GM12878 (cell line): ENCODE measurements at regions of chr9 and their contacts with region 1.

Region 1: DNA sequence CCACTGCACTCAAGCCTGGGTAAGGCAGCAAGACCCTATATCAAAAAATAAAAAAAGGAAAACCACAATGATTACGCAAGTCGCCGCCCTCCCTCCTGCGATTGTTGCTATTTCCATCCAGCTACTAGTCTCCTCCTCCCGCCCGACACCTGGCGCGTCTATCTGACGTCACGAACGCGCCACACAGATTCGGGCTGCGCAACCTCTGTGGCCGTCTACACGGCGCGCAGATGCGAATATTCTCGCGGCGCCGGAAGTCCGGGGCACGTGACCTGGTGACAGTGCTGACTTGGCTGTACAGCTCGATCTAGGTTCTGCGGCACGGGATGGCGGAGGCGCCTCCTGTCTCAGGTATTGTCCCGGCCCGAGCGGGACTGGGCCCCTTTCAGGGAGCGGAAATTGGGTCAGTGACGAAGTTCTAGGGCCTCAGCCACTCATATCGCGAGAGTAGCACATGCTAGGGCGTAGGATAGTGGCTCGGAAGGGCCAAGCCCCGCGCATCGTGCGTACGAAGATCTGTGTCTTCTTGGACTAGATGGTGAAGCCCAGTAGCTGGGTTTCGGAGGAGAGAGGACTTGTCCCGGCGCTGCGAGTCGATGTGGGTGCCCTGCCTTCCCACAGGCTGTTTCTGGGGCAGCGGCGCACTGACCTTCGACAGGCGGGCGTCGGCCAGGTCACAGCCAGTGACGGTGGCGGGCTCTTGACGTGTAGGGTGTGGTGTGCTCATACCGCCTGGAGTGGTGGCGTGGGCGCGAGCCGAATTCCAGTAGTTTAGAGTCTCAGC is at the start of gene NFX1:
- DNase-seq: peak; percentile 94
- ATAC-seq: peak; percentile 92
- H3K4me3 ChIP-seq: peak within 1 kb of the TSS; percentile 77
- H3K27ac ChIP-seq: peak within 1 kb of the TSS; percentile 100
- H3K4me1 ChIP-seq: peaks cover 16% of the 10 kb centered on the region
- H3K27me3 ChIP-seq: no peaks in the 10 kb centered on the region
- CTCF ChIP-seq: no peak
- EP300 ChIP-seq: peak in 1 of 2 experiments; percentile 43; a peak in 1 of 4 replicates
- POLR2A ChIP-seq: peak; percentile 98
- RAD21 ChIP-seq: no peak
- polyA plus RNA-seq, gene NFX1: 11.9 to 18.6 TPM

Region 2: DNA sequence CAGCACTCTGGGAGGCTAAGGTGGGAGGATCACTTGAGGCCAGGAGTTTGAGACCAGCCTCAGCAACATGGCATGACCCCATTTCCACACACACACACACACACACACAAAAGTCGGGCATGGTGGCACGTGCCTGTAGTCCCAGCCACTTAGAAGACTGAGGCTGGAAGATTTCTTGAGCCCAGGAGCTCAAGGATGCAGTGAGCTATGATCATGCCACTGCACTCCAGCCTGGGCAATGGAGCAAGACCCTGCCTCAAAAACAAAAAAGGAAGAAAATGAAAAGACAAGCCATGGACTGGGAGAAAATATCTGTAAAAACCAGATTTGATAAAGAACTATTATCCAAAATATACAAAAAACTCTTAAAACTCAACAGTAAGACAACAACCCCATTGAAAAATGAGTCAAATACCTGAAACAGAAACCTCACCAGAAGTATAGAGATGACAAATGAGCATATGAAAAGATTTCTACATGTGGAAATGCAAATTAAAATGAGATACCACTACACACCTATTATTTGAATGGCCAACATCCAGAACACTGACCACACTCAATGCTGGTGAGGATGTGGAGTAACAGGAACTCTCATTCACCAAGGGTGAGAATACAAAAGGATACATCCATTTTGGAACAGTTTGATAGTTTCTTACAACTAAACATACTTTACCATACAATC is 240.6 kb before region 1 on chr9:
- CTCF ChIA-PET with region 1: no interaction called
- POLR2A ChIA-PET with region 1: no interaction called
- RAD21 ChIA-PET with region 1: no interaction called
- SMC1A ChIA-PET with region 1: no interaction called
- in situ Hi-C with region 1: no loop called
- intact Hi-C with region 1: no loop called
- DNase-seq: no peak
- ATAC-seq: peak; percentile 91
- H3K4me3 ChIP-seq: no peak overlapping the region
- H3K27ac ChIP-seq: no peak overlapping the region; the same call in 1 of the 2 replicates
- H3K4me1 ChIP-seq: peaks cover 18% of the 10 kb centered on the region
- H3K27me3 ChIP-seq: no peaks in the 10 kb centered on the region
- CTCF ChIP-seq: no peak
- EP300 ChIP-seq: no peak
- POLR2A ChIP-seq: no peak
- RAD21 ChIP-seq: no peak

Region 3: DNA sequence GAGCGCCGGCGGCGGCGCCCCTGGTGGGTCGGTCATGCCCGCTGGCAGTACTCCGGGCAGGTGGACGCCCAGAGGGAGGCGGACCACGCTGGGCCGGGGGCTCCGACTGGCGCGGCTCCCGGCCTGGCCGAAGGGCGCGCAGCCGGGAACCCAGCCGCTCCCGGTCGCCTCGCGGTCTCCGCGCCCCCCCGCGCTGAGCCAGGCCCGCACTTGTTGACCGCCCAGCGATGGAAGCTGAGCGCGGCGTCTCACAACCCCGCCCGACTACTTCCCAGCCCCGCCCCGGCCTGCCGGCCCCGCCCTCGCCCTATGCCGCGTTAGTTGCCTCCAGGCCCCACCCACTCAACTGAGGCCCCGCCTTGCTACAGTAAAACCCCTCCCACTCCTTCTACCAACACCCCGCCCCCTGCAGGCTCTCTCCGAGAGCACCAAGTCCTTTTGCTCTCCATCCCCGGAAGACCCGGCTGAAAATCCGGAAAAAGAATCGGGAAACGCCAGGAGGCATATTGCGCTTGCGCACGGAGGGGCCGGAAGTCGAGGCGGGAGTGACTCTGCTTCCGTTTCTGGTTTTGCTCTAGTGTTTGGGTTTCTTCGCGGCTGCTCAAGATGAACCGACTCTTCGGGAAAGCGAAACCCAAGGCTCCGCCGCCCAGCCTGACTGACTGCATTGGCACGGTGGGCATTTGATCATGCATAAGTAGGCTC is 25.8 kb before region 1 on chr9 and contains the starts of genes BAG1 and CHMP5:
- CTCF ChIA-PET with region 1: interaction called, 9 read pairs
- POLR2A ChIA-PET with region 1: interaction called, 10 read pairs
- RAD21 ChIA-PET with region 1: interaction called, 3 read pairs
- SMC1A ChIA-PET with region 1: interaction called, 3 read pairs
- in situ Hi-C with region 1: no loop called
- intact Hi-C with region 1: loop called (anchors 1 kb)
- DNase-seq: peak; percentile 96
- ATAC-seq: peak; percentile 92
- H3K4me3 ChIP-seq: peak within 1 kb of the TSS; percentile 97
- H3K27ac ChIP-seq: peak within 1 kb of the TSS; percentile 98
- H3K4me1 ChIP-seq: peaks cover 8% of the 10 kb centered on the region
- H3K27me3 ChIP-seq: no peaks in the 10 kb centered on the region
- CTCF ChIP-seq: peak; percentile 15 to 31 (median 30); a peak in 2 of 6 replicates
- EP300 ChIP-seq: no peak
- POLR2A ChIP-seq: peak; percentile 86
- RAD21 ChIP-seq: 0 out of 2 replicates have a peak, but pooled peaks have one; percentile 12
- polyA plus RNA-seq, gene BAG1: 11.6 to 43.8 TPM
- polyA plus RNA-seq, gene CHMP5: 121 to 152 TPM

Region 4: DNA sequence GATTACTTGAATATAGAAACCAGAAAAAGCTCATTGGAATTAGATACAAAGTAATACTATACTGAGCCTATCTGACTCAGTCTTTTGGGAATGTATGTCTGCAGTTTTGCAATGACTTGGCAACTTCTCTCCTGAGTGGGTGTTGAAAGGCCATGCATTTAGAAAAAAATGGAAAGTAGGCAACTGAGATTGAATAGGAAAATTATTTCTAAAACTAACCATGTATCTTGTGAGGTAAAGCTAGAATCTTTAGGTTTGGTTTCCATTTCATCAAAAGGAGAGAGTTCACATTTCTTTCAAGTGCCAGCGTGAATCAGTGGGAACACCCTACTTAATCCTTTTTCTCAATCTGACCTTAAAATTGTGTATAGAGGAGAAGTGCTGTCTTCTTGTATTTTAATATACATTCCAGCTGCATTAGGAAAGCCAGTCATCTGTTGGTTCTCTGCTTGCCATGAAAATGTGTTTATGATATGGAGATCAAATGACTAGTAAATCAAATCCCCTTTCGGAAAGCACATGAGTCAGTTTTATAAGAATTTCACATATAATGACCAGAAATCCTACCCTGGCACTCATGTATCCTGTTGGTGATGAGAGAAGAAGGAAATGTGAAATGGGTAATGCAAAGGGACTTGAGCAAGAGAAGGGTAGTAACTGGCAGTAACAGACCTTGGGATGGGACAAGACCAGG is 30.3 kb after region 1 on chr9:
- CTCF ChIA-PET with region 1: interaction called, 27 read pairs
- POLR2A ChIA-PET with region 1: interaction called, 3 read pairs
- RAD21 ChIA-PET with region 1: interaction called, 6 read pairs
- SMC1A ChIA-PET with region 1: interaction called, 4 read pairs
- in situ Hi-C with region 1: no loop called
- intact Hi-C with region 1: no loop called
- DNase-seq: no peak
- ATAC-seq: no peak
- H3K4me3 ChIP-seq: no peak overlapping the region
- H3K27ac ChIP-seq: no peak overlapping the region
- H3K4me1 ChIP-seq: no peaks in the 10 kb centered on the region
- H3K27me3 ChIP-seq: no peaks in the 10 kb centered on the region
- CTCF ChIP-seq: no peak
- EP300 ChIP-seq: no peak
- POLR2A ChIP-seq: no peak
- RAD21 ChIP-seq: no peak

Region 5: GRCh38 chr9:33393581-33393980 is 103.1 kb after region 1 on chr9:
- CTCF ChIA-PET with region 1: no interaction called
- POLR2A ChIA-PET with region 1: no interaction called
- RAD21 ChIA-PET with region 1: no interaction called
- SMC1A ChIA-PET with region 1: no interaction called
- in situ Hi-C with region 1: no loop called
- intact Hi-C with region 1: no loop called
- DNase-seq: no peak
- ATAC-seq: no peak
- H3K4me3 ChIP-seq: no peak overlapping the region
- H3K27ac ChIP-seq: no peak overlapping the region
- H3K4me1 ChIP-seq: no peaks in the 10 kb centered on the region
- H3K27me3 ChIP-seq: no peaks in the 10 kb centered on the region
- CTCF ChIP-seq: no peak
- EP300 ChIP-seq: no peak
- POLR2A ChIP-seq: no peak
- RAD21 ChIP-seq: no peak

Region 6: GRCh38 chr9:33452828-33453271 is 162.4 kb after region 1 on chr9:
- CTCF ChIA-PET with region 1: interaction called, 13 read pairs
- POLR2A ChIA-PET with region 1: interaction called, 7 read pairs
- RAD21 ChIA-PET with region 1: interaction called, 5 read pairs
- SMC1A ChIA-PET with region 1: interaction called, 4 read pairs
- in situ Hi-C with region 1: no loop called
- intact Hi-C with region 1: loop called (anchors 10 kb)
- DNase-seq: no peak
- ATAC-seq: peak; percentile 84
- H3K4me3 ChIP-seq: no peak overlapping the region
- H3K27ac ChIP-seq: no peak overlapping the region
- H3K4me1 ChIP-seq: peaks cover 32% of the 10 kb centered on the region
- H3K27me3 ChIP-seq: 0 out of 4 replicates have a peak, but pooled peaks cover 0 to 1% of the 10 kb centered on the region in 2 experiments
- CTCF ChIP-seq: peak; percentile 52 to 78 (median 70)
- EP300 ChIP-seq: no peak
- POLR2A ChIP-seq: no peak
- RAD21 ChIP-seq: peak; percentile 60

Region 7: GRCh38 chr9:33649463-33649862 is 359.0 kb after region 1 on chr9:
- CTCF ChIA-PET with region 1: no interaction called
- POLR2A ChIA-PET with region 1: no interaction called
- RAD21 ChIA-PET with region 1: no interaction called
- SMC1A ChIA-PET with region 1: no interaction called
- in situ Hi-C with region 1: no loop called
- intact Hi-C with region 1: no loop called
- DNase-seq: no peak
- ATAC-seq: peak; percentile 27; the same call in 1 of the 3 replicates
- H3K4me3 ChIP-seq: no peak overlapping the region
- H3K27ac ChIP-seq: no peak overlapping the region
- H3K4me1 ChIP-seq: no peaks in the 10 kb centered on the region
- H3K27me3 ChIP-seq: no peaks in the 10 kb centered on the region
- CTCF ChIP-seq: no peak
- EP300 ChIP-seq: no peak
- POLR2A ChIP-seq: no peak
- RAD21 ChIP-seq: no peak